CD4-positive, alpha-beta memory T cell (primary cell): ENCODE measurements at regions of chr1 and their contacts with region 1.

Region 1: GRCh38 chr1:23098463-23099170 is 70.0 kb downstream of the LUZP1 start:
- DNase-seq: peak; percentile 65 to 72 (median 67)
- H3K4me3 ChIP-seq: no peak overlapping the region
- H3K4me3 Mint-ChIP-seq: peak overlapping the region in 6 of 8 donors; percentile 33 to 66 (median 40)
- H3K27ac ChIP-seq: no peak overlapping the region
- H3K27ac Mint-ChIP-seq: peak overlapping the region in 6 of 7 donors; percentile 57 to 89 (median 83)
- H3K4me1 ChIP-seq: peaks cover 49% of the 10 kb centered on the region
- H3K4me1 Mint-ChIP-seq: peaks cover 32 to 56% (median 44%) of the 10 kb centered on the region in 4 donors
- H3K27me3 ChIP-seq: no peaks in the 10 kb centered on the region
- H3K27me3 Mint-ChIP-seq: no peaks in the 10 kb centered on the region

Region 2: GRCh38 chr1:23004112-23004511 is 94.5 kb before region 1 on chr1:
- CTCF ChIA-PET with region 1: no interaction called
- POLR2A ChIA-PET with region 1: no interaction called
- intact Hi-C with region 1: no loop called
- DNase-seq: no peak
- H3K4me3 ChIP-seq: no peak overlapping the region
- H3K4me3 Mint-ChIP-seq: no peak overlapping the region
- H3K27ac ChIP-seq: no peak overlapping the region
- H3K27ac Mint-ChIP-seq: no peak overlapping the region
- H3K4me1 ChIP-seq: no peaks in the 10 kb centered on the region
- H3K4me1 Mint-ChIP-seq: no peaks in the 10 kb centered on the region
- H3K27me3 ChIP-seq: no peaks in the 10 kb centered on the region
- H3K27me3 Mint-ChIP-seq: peaks cover 0 to 5% of the 10 kb centered on the region in 2 donors

Region 3: DNA sequence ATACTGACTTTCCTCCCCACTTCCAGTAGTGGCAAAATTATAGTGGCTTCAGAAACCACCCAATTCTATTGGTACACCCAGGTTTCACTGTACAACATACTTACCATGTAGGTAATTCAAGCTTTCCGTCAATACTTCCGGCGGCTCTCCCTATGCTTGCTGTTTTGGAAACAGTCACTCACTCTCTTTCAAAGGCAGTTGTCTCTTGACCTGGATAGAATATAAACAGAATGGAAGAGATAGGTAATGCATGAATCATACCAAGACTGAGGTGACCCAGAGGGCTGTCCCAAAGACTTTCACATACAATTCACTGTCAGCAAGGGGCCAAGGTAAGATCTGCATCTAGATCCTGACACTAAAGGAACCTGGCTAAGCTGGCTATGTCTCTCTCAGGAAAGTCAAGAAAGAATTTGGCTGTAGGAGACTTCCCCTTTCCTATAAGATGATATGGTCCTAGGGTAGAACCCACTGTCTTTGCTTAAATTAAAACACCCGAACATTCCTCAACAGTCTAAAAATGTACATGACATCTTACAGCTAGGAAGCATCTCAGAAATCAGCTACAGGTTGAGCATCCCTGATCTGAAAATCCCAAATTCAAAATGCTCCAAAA is 10.4 kb after region 1 on chr1:
- CTCF ChIA-PET with region 1: interaction called, 44 read pairs
- POLR2A ChIA-PET with region 1: interaction called, 35 read pairs
- intact Hi-C with region 1: no loop called
- DNase-seq: peak in 1 of 5 donors; percentile 66
- H3K4me3 ChIP-seq: no peak overlapping the region
- H3K4me3 Mint-ChIP-seq: peak overlapping the region in 5 of 8 donors; percentile 2 to 74 (median 31)
- H3K27ac ChIP-seq: no peak overlapping the region
- H3K27ac Mint-ChIP-seq: peak overlapping the region in 6 of 7 donors; percentile 6 to 88 (median 62)
- H3K4me1 ChIP-seq: peaks cover 55% of the 10 kb centered on the region
- H3K4me1 Mint-ChIP-seq: peaks cover 38 to 73% (median 45%) of the 10 kb centered on the region in 4 donors
- H3K27me3 ChIP-seq: no peaks in the 10 kb centered on the region
- H3K27me3 Mint-ChIP-seq: no peaks in the 10 kb centered on the region

Region 4: DNA sequence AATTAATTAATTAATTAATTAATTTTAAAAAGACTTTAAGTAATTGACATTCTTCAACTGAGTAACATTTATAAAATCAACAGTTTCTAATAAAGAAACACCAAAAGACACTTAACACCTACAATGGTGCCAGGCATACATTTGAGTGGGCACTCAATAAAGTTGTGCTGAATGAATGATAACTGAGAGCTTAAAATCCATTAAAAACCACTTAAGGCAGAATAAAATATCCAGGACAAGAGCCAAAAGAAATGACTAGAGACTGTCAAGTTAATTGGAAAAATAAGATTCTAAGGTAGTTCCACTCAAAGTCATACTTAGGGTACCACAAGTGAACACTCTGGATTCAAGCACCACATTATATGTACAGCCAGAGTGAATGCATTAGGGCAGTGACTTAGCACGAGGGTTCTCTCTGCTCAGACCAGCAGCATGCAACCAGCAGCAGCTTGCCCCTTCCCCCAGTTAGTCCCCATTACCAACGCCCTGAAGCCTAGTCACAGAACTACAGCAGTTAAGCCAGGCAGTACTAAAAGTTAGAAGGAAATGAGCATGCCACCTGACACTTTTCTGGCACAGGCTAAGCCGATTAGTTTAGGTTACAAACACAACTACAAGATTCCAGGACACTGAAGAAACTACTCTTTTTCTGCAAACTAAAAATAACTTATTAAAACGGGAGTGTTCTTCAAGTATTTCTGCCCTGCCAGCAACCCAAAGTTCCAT is 23.6 kb after region 1 on chr1:
- CTCF ChIA-PET with region 1: interaction called, 62 read pairs
- POLR2A ChIA-PET with region 1: interaction called, 49 read pairs
- intact Hi-C with region 1: loop called (anchors 2 kb)
- DNase-seq: no peak
- H3K4me3 ChIP-seq: no peak overlapping the region
- H3K4me3 Mint-ChIP-seq: no peak overlapping the region
- H3K27ac ChIP-seq: no peak overlapping the region
- H3K27ac Mint-ChIP-seq: peak overlapping the region in 4 of 7 donors; percentile 2 to 67 (median 33)
- H3K4me1 ChIP-seq: peaks cover 59% of the 10 kb centered on the region
- H3K4me1 Mint-ChIP-seq: peaks cover 43 to 87% (median 63%) of the 10 kb centered on the region in 4 donors
- H3K27me3 ChIP-seq: no peaks in the 10 kb centered on the region
- H3K27me3 Mint-ChIP-seq: no peaks in the 10 kb centered on the region

Region 5: DNA sequence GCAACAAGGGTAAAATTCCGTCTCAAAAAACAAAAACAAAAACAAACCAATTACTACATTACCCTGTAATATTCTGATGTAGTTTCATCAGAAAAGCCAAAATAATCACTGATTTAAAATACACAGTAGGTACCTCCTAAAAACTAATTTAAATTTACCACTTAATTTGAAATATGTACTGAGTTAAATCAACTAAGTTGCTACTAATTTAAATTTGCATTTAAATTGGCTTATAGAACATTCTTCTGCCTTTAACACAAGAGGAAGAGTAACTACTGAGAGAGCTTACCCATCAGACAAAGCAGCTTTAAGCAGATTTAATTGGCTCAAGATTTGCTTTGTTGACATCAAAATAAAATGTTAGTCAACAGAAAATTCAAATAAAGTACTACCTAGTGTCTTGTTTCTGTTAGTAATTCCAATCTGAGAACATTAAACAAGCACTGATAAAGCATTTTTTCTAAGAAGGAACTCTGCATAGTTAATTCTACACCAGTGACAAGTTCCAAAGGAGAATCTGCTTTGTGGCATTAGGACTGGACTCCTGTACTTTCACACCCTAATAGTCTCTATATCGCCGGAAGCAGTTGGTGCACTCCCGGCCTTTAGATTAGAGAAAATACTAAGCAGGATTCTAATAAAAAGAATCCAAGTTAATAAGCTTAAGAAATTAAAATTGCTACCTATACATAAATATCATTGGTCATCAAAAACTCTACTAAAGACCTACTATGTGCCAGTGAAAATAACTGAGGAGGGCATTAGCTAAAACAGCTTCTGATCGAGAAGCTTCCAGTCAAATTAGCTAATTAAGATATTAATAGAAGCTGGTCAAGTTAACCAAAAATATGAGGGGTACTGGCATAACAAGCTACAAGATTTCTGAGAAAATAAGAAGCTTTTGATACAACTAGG is 61.6 kb after region 1 on chr1:
- CTCF ChIA-PET with region 1: interaction called, 11 read pairs
- POLR2A ChIA-PET with region 1: interaction called, 7 read pairs
- intact Hi-C with region 1: no loop called
- DNase-seq: no peak
- H3K4me3 ChIP-seq: no peak overlapping the region
- H3K4me3 Mint-ChIP-seq: no peak overlapping the region
- H3K27ac ChIP-seq: no peak overlapping the region
- H3K27ac Mint-ChIP-seq: no peak overlapping the region
- H3K4me1 ChIP-seq: no peaks in the 10 kb centered on the region
- H3K4me1 Mint-ChIP-seq: peaks cover 10 to 43% (median 16%) of the 10 kb centered on the region in 4 donors
- H3K27me3 ChIP-seq: no peaks in the 10 kb centered on the region
- H3K27me3 Mint-ChIP-seq: no peaks in the 10 kb centered on the region

Region 6: DNA sequence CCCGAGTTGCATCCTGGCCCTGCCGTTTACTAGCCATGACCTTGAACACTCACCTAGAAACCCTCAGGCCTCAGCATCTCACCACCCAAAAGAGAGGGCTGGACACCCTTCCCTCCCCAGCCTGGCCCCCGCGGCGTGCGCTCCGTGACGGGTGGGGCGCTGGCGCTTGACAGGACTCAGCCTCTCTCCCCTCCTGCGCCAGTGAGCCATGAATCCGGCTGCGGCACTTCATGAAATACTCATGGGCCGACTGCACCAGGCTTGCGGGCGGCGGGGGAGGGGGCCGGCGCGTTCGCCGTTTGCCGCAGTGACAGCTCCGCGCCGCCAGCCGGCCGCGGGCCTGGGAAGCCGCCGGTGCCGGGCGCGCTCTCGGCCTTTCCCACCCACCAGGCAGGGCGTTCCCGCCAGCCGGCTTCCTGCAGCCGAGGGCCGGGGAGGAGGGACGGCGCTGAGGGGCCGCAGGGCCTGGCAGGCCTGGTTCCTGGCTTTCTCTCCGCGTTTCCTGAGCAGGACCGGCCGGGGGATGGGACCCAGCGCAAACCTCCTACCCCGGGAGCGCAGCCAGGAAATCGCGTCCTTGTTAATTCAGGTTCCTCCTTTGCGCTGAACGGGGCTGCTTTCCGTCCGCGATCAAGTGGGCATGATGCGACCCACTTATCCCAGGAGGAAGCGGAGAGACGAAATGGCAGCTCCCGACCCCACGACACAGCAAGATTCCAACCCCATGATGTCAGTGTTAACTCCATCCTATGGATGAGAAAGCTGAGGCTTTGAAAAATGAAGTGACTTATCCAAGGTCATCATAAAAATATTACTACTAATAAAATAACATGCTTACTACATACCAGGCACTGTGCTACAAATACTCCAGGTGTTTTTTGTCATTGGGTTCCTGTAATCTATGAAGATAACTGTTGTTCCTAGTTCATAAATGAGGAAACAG is 79.1 kb after region 1 on chr1:
- CTCF ChIA-PET with region 1: interaction called, 694 read pairs
- POLR2A ChIA-PET with region 1: interaction called, 71 read pairs
- intact Hi-C with region 1: no loop called
- DNase-seq: peak; percentile 30 to 62 (median 31)
- H3K4me3 ChIP-seq: peak overlapping the region in 1 of 2 donors; percentile 41
- H3K4me3 Mint-ChIP-seq: peak overlapping the region; percentile 71 to 87 (median 78)
- H3K27ac ChIP-seq: no peak overlapping the region
- H3K27ac Mint-ChIP-seq: peak overlapping the region in 3 of 7 donors; percentile 22 to 62 (median 46)
- H3K4me1 ChIP-seq: peaks cover 14% of the 10 kb centered on the region
- H3K4me1 Mint-ChIP-seq: peaks cover 6 to 17% (median 11%) of the 10 kb centered on the region in 4 donors
- H3K27me3 ChIP-seq: no peaks in the 10 kb centered on the region
- H3K27me3 Mint-ChIP-seq: peaks cover 0 to 1% of the 10 kb centered on the region in 2 donors

Region 7: GRCh38 chr1:23403735-23404486 is 305.3 kb after region 1 on chr1:
- CTCF ChIA-PET with region 1: interaction called, 3 read pairs
- POLR2A ChIA-PET with region 1: no interaction called
- intact Hi-C with region 1: loop called (anchors 5 kb)
- DNase-seq: peak; percentile 69 to 76 (median 74)
- H3K4me3 ChIP-seq: no peak overlapping the region
- H3K4me3 Mint-ChIP-seq: no peak overlapping the region
- H3K27ac ChIP-seq: no peak overlapping the region
- H3K27ac Mint-ChIP-seq: peak overlapping the region in 2 of 7 donors; percentile 14 to 22
- H3K4me1 ChIP-seq: peaks cover 11% of the 10 kb centered on the region
- H3K4me1 Mint-ChIP-seq: peaks cover 5 to 12% (median 9%) of the 10 kb centered on the region in 4 donors
- H3K27me3 ChIP-seq: no peaks in the 10 kb centered on the region
- H3K27me3 Mint-ChIP-seq: no peaks in the 10 kb centered on the region